ENCODE measurements at regions of chr6 and their contacts with region 1.

Region 1: DNA sequence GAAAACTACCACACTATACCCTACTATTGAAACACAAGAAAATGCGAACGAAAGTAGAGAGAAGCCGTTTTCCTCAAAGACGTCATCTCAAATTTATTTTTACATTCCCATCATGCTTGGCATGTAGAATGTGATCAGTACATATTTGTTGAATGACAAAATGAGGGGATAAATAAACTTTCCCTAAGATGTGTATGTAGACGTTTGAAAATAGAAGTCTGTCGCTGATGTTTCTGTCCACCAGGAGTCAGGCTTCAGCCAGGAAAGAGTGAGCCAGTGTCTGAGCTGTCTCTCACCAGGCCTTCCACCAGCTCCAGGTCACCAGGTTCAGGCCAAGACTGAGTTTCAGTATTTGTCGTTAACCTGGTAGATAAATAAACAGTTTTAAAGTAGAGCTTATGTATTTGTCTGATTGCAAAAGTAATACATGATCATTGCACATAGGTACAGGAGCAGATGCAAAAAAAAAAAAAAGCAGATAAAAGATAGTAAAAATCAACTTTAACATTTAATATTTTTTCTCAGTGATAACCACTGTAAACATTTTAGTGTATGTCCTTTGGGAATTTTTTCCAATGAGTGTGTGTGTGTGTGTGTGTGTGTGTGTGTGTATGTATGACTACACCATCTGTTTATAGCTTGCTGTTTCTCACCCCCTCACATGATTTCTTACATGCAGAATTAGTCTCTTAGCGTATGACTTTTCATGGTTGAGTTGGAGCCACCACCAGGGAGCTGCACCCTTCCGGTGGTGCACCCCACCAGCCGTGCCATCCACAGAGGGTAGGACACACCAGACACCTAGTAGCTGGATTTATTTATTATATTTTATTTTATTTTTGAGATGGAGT is 26.2 kb downstream of the WRNIP1 start:
- DNase-seq: no peak
- ATAC-seq: peak; percentile 89

Region 2: GRCh38 chr6:2738373-2738979 is 52.9 kb before region 1 on chr6:
- intact Hi-C with region 1: no loop called
- DNase-seq: no peak
- ATAC-seq: no peak

Region 3: DNA sequence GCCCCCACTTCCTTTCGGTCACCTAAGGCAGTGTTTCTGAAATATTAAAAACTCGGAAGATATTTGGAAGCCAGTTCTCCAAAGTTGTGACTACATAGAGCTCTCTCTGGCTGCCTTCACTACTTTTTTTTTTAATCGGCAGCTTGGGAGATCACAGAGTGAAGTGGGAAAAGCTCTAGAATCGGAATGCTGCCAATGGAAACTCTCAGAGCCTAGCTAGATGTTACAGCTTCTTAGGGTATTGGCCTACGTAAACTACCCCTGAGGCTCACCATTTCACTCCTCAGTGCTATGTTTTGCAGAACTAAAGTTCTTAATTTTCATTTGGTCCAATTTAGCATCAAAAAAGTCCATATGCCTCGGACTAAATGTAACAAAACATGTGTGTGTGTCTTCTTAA is 35.8 kb after region 1 on chr6:
- intact Hi-C with region 1: loop called (anchors 5 kb)
- DNase-seq: no peak
- ATAC-seq: peak; percentile 56

Region 4: DNA sequence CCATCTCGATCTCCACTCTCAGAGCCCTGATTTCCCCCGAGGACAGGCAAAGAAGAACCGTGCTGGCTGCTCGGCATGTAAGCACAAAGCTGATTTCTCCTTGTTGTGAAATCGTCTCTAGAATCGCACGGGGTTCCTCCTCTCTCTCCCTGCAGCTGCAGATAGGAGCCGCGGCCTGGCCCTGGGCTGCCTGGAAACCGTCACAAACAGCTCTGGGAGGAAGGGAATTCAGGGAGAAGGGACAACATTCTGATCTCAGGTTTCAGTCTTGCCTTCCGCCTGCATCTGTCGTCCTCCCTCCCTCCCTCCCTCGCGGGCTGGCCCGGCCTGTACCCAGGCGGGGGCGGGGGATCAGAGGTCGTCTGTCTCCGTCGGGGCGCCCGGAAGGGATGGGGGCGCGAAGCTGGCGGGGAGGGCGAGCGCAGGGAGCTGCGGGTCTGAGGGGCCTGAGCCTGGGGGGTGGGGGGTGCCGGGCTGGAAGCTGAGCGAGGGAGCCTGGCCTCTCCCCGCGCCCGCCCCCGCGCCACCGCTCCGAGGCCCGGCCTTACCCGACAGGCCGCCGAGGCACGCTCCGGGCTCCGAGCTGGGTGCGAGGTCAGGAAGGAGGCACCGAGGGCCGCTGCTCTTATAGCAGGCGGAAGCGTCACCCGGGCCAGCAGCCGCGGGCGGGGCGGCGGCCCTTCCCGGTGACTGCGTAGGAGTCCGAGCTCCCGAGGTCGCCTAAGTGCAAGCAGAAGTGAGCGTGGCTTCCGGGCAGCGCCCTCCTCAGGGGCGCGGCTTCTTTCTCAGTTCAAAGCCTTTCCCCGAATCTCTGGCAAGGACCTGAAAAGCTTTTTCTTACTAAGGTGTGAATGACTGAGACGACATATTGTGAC is 50.2 kb after region 1 on chr6 and contains the start of gene SERPINB1:
- intact Hi-C with region 1: loop called (anchors 2 kb)
- DNase-seq: peak; percentile 98
- ATAC-seq: peak; percentile 91
- total RNA-seq, gene SERPINB1: 27.5 TPM

Region 5: GRCh38 chr6:2911171-2911570 is 119.8 kb after region 1 on chr6:
- intact Hi-C with region 1: loop called (anchors 5 kb)
- DNase-seq: no peak
- ATAC-seq: no peak

Region 6: GRCh38 chr6:2931970-2932748 is 140.8 kb after region 1 on chr6:
- intact Hi-C with region 1: loop called (anchors 1 kb)
- DNase-seq: no peak
- ATAC-seq: peak; percentile 96

Measured in Right ventricle myocardium inferior (tissue), 1 donor.